ENCODE measurements at regions of chr2 and their contacts with region 1.

Region 1: DNA sequence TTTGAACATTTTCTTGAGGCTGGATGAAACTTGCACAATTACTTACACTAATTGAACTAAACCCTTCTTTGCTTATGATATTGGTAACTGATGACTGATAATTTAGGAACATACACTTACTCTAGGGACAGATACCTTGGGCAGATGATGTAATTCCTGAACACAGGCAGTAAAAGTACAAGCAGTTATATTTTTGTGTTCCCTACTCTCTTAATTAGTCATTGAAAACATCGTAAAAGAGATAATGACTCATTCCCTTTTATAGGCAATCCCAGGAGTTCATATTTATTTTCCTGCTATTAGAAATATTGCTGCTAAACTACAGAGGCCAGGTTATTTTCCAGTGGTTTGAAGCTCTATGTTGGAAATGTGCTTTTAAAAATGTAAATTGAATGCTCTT is 46.4 kb downstream of the CCDC85A start:
- DNase-seq: peak; percentile 89
- ATAC-seq: peak; percentile 74
- H3K4me3 ChIP-seq: peak overlapping the region; percentile 37; the same call in 1 of the 2 replicates
- H3K27ac ChIP-seq: peak overlapping the region; percentile 72
- H3K4me1 ChIP-seq: peaks cover 31% of the 10 kb centered on the region
- H3K27me3 ChIP-seq: 0 out of 2 replicates have a peak, but pooled peaks cover 5% of the 10 kb centered on the region
- CTCF ChIP-seq: no peak

Region 2: GRCh38 chr2:56313500-56313921 is 83.3 kb after region 1 on chr2:
- CTCF ChIA-PET with region 1: no interaction called
- POLR2A ChIA-PET with region 1: no interaction called
- intact Hi-C with region 1: no loop called
- DNase-seq: no peak
- ATAC-seq: no peak
- H3K4me3 ChIP-seq: no peak overlapping the region
- H3K27ac ChIP-seq: no peak overlapping the region
- H3K4me1 ChIP-seq: no peaks in the 10 kb centered on the region
- H3K27me3 ChIP-seq: peaks cover 31% of the 10 kb centered on the region
- CTCF ChIP-seq: no peak

Region 3: GRCh38 chr2:56580242-56580641 is 350.1 kb after region 1 on chr2:
- CTCF ChIA-PET with region 1: no interaction called
- POLR2A ChIA-PET with region 1: no interaction called
- intact Hi-C with region 1: loop called (anchors 5 kb)
- DNase-seq: peak; percentile 83
- ATAC-seq: peak; percentile 65
- H3K4me3 ChIP-seq: no peak overlapping the region
- H3K27ac ChIP-seq: no peak overlapping the region
- H3K4me1 ChIP-seq: peaks cover 47% of the 10 kb centered on the region
- H3K27me3 ChIP-seq: no peaks in the 10 kb centered on the region
- CTCF ChIP-seq: no peak